ENCODE measurements at regions of chr6 and their contacts with region 1.

Region 1: DNA sequence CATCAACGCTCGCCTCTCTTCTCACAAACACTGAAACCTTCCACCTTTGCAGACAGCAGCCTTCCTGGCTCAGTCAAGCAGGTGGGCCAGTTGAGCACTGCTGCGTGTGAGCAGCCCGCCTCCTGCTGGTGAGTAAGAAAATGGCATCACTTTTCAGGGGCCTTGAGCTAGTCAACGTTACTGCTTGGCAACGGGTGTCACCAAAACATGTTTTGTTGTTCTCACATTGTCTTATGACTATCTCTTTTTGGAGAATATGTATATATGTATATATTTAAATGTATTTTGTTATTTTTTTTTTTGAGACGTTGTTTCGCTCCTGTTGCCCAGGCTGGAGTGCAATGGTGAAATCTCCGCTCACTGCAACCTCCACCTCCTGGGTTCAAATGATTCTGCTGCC is 97.0 kb upstream of the AGPAT4 start:
- DNase-seq: peak; percentile 44 to 55
- H3K4me3 ChIP-seq: no peak overlapping the region
- H3K27ac ChIP-seq: no peak overlapping the region
- H3K4me1 ChIP-seq: no peaks in the 10 kb centered on the region
- H3K27me3 ChIP-seq: no peaks in the 10 kb centered on the region
- CTCF ChIP-seq: peak; percentile 80 to 86 (median 82)
- POLR2A ChIP-seq: no peak

Region 2: DNA sequence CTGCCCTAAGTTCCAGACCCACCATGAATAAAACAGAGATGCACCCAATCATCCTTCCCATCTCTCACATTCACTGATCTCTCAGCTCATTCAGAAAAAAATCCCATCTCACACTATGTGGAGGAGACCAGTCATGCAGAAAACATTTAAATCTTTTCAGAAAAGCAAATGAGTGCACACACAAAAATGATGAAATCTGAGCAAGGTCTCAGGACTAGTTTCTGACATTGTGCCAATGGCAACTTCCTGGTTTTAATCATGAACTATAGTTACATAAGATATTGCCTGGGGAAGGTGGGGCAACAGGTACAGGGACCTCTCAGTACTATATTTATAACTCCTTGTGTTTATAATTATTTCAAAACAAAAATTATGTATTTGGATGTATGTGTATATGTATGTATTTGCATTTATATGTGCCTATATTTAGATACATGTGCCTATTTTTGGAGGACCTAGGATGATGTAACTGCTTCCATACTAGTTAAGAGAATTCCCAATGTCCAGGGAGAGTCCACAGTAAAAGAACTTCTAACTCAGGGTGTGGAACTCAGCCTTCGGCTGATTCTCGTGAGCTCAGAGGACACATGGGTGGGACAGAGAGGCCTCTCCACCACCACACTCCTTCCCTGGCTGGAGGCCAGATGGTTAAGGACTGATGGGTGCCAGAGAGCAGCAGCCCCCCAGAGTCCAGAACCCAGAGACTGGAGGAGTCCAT is 451.0 kb before region 1 on chr6:
- intact Hi-C with region 1: loop called (anchors 10 kb)
- DNase-seq: no peak
- H3K4me3 ChIP-seq: no peak overlapping the region
- H3K27ac ChIP-seq: no peak overlapping the region
- H3K4me1 ChIP-seq: no peaks in the 10 kb centered on the region
- H3K27me3 ChIP-seq: no peaks in the 10 kb centered on the region
- CTCF ChIP-seq: no peak
- POLR2A ChIP-seq: no peak

Region 3: GRCh38 chr6:161139766-161140553 is 230.9 kb before region 1 on chr6:
- intact Hi-C with region 1: loop called (anchors 5 kb)
- DNase-seq: peak in 1 of 2 donors; percentile 65
- H3K4me3 ChIP-seq: no peak overlapping the region
- H3K27ac ChIP-seq: peak overlapping the region in 1 of 2 donors; percentile 10
- H3K4me1 ChIP-seq: no peaks in the 10 kb centered on the region
- H3K27me3 ChIP-seq: no peaks in the 10 kb centered on the region
- CTCF ChIP-seq: peak in 2 of 4 experiments; percentile 57 to 68
- POLR2A ChIP-seq: no peak

Region 4: DNA sequence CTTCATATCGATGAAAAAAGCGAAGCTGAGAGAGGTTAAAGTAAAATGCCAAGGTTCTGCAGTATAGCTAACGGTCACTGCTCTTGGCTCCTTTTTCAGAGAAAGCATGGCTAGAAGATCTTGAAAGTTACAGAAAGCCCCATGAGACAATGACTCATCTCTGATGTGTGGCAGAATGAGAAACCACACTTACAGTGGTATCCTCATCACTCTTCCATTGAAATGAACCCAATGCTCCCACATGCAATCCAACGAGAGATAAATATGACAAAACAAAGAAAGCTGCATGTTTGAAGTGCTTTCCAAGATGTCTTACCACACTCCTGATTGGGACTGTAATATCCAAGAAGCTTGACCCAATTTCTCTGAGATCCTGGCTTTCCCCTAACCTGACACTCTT is 661.7 kb after region 1 on chr6:
- intact Hi-C with region 1: no loop called
- DNase-seq: no peak
- H3K4me3 ChIP-seq: no peak overlapping the region
- H3K27ac ChIP-seq: no peak overlapping the region
- H3K4me1 ChIP-seq: no peaks in the 10 kb centered on the region
- H3K27me3 ChIP-seq: no peaks in the 10 kb centered on the region
- CTCF ChIP-seq: no peak
- POLR2A ChIP-seq: no peak

Measured in uterus (tissue), 4 donors.